ENCODE measurements at regions of chr12 and their contacts with region 1.

Region 1: GRCh38 chr12:52980693-52981423 is 25.4 kb upstream of the EIF4B start:
- DNase-seq: peak; percentile 98
- ATAC-seq: peak; percentile 81
- H3K4me3 ChIP-seq: no peak overlapping the region
- H3K27ac ChIP-seq: peak overlapping the region; percentile 6; the same call in 1 of the 2 replicates
- H3K4me1 ChIP-seq: peaks cover 15 to 25% of the 10 kb centered on the region in 2 experiments; a peak in 3 of 4 replicates
- H3K27me3 ChIP-seq: no peaks in the 10 kb centered on the region
- CTCF ChIP-seq: peak in 2 of 3 experiments; percentile 98 to 100; a peak in 4 of 6 replicates
- POLR2A ChIP-seq: no peak
- RAD21 ChIP-seq: no peak

Region 2: GRCh38 chr12:52147367-52147972 is 833.4 kb before region 1 on chr12:
- CTCF ChIA-PET with region 1: interaction called, 17 read pairs
- POLR2A ChIA-PET with region 1: interaction called, 4 read pairs
- RAD21 ChIA-PET with region 1: interaction called in 1 of 2 experiments, 5 read pairs
- intact Hi-C with region 1: loop called (anchors 2 kb)
- DNase-seq: peak; percentile 99
- ATAC-seq: peak; percentile 61
- H3K4me3 ChIP-seq: peak overlapping the region; percentile 46 to 55
- H3K27ac ChIP-seq: peak overlapping the region; percentile 100
- H3K4me1 ChIP-seq: peaks cover 83 to 99% of the 10 kb centered on the region in 2 experiments
- H3K27me3 ChIP-seq: no peaks in the 10 kb centered on the region
- CTCF ChIP-seq: no peak
- POLR2A ChIP-seq: no peak
- RAD21 ChIP-seq: no peak

Region 3: DNA sequence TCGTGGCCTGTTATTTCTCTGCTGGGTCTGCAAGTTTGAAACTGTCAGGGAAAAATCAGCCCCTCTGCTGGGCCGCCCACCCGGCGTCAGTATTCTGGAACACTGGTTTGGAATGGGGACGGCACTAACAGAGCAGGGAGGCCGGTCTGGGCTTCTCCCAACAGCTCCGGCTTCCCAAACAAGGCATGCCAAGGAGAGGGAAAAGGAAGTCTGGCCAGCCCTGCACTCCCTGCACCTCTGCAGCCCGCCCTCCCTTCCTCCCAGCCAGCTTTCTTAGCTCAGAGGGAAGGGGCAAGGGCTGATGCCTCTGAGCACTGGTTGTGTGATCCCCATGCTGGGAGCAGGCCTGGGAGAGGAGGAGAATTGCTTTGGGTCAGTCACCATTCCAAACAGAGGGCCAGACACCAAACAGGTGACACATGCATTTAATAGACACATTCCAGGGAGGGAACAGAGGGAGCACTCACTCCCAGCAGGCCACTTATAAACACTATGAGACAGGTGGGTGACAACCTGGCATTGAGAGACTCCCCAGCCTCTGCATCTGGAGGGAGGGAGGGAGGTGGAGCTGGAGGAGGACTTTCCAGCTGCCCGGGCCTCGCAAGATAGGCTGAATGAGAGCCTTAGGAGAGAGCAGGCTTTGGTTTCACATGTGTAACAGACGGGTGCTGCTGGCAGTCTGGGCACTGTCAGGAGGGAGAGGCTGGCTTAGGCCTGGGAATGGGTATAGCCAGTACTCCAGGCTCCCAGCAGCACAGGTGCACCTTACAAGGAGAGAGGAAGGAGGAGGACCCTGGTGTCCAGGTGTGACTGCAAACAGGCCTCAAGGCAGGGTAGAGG is 557.0 kb before region 1 on chr12:
- CTCF ChIA-PET with region 1: no interaction called
- POLR2A ChIA-PET with region 1: no interaction called
- RAD21 ChIA-PET with region 1: no interaction called
- intact Hi-C with region 1: no loop called
- DNase-seq: no peak
- ATAC-seq: peak; percentile 37
- H3K4me3 ChIP-seq: no peak overlapping the region
- H3K27ac ChIP-seq: no peak overlapping the region
- H3K4me1 ChIP-seq: peaks cover 0 to 23% of the 10 kb centered on the region in 2 experiments; a peak in 2 of 4 replicates
- H3K27me3 ChIP-seq: no peaks in the 10 kb centered on the region
- CTCF ChIP-seq: no peak
- POLR2A ChIP-seq: no peak
- RAD21 ChIP-seq: no peak

Region 4: DNA sequence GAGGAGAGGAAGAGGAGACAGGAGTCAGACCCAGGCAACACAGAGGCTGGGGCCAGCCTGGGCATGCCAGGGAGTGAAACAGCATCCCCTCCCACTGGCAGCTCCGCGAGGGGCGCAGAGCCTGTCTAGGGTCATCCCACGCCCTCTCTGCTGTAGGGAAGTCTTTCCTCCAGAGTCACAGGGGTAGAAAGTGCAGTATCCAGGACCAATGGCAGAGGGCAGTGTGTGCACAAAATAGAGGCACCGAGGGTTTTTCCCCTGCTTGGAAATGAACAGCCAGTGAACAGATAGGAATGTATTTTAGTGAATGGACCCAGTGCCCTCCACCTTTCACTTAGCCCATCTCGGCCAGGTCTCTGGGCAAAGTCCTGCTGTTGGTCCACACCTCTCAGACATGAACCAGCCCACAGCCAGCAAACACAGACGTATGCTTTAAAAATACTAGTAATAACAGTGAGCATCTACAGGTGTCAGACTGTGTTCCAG is 397.8 kb before region 1 on chr12:
- CTCF ChIA-PET with region 1: interaction called, 4 read pairs
- POLR2A ChIA-PET with region 1: no interaction called
- RAD21 ChIA-PET with region 1: no interaction called
- intact Hi-C with region 1: loop called (anchors 2 kb)
- DNase-seq: peak; percentile 36
- ATAC-seq: peak; percentile 96
- H3K4me3 ChIP-seq: no peak overlapping the region
- H3K27ac ChIP-seq: no peak overlapping the region
- H3K4me1 ChIP-seq: peaks cover 0 to 40% of the 10 kb centered on the region in 2 experiments; a peak in 3 of 4 replicates
- H3K27me3 ChIP-seq: no peaks in the 10 kb centered on the region
- CTCF ChIP-seq: peak; percentile 73 to 95 (median 79)
- POLR2A ChIP-seq: no peak
- RAD21 ChIP-seq: peak; percentile 93

Region 5: DNA sequence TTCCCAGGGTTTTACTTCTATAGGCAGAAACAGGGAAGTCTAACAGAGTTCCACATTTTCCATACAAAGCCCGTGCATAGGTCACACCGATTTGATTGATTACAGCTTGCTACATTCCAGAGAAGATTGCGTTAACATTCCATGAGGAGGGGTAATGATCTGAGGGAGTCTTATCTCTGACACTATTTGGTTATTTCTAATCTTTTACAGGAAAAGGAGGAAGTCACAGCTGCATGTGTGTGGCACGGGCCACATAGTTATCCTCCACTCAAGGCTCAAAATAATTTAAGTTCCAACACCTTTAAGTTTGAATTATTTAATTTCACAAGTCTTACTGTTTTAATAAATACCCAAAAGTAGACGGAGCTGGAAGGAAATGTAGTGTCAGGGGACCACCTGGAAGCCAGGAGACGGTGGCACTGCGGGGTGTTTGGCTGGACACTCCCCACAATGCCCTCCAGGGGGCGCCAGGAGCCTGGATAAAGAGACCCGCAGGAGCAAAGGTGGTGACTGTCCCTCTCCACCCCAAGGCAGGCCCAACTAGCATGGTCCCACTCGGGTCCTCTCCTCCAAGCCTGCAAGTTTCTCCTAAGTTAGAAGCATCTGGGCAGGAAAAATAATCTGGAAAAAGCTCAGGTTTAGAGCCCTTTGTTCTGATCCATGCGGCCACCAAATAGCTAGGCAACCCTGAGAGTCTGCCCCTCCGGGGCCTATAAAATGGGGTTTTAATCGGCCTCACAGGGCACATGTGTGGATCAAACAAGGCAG is 96.1 kb before region 1 on chr12:
- CTCF ChIA-PET with region 1: interaction called, 370 read pairs
- POLR2A ChIA-PET with region 1: interaction called, 50 read pairs
- RAD21 ChIA-PET with region 1: interaction called, 48 to 90 read pairs
- intact Hi-C with region 1: loop called (anchors 1 kb)
- DNase-seq: no peak
- ATAC-seq: peak; percentile 85
- H3K4me3 ChIP-seq: no peak overlapping the region
- H3K27ac ChIP-seq: no peak overlapping the region
- H3K4me1 ChIP-seq: peaks cover 16 to 35% of the 10 kb centered on the region in 2 experiments; a peak in 3 of 4 replicates
- H3K27me3 ChIP-seq: no peaks in the 10 kb centered on the region
- CTCF ChIP-seq: peak; percentile 87 to 99 (median 97)
- POLR2A ChIP-seq: no peak
- RAD21 ChIP-seq: peak; percentile 100

Region 6: DNA sequence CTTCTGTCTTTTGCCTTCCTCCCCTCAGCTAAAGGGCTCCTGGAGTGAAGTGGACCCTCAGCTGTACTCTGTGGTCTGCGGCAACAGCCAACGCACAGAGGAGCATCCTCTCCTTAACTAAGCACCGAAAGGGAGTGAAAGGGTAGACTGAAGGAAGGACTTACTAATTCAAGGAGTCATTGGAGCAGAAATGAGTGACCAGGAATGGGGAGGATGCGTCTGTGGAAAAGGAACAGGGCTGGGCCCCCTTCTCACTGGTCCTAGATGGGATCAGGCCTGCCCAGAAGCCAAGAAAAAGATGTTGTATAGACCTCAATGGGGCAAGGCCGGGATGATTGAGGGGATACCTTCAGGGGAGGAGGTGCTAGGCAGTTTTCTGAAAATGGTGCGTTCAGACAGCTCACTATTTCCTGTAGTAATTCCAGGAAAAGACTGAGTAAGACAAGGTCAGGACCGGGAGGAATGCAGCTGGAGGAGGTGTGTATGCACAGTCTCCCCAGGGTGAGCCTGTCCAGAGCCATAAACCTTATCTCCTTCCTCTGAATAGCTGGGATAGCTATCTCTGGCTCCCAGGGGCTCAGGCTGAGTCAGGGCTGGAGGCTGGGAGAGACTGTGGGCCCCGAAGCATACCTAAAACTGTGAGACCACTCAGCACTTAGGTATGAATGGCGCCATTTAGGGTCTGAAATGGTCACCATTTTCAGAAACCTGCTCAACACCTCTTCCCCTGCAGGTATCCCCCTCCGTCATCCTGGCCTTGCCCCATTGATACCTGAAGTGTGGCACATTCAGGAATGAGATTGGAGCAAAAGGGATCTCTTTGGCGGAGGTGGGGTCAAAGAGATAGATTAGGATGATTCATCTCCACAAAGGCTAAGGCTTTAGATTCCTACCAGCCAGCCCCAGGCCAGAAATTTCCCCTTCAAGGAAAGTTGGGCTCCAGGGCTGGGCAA is 55.8 kb before region 1 on chr12:
- CTCF ChIA-PET with region 1: interaction called, 17 read pairs
- POLR2A ChIA-PET with region 1: interaction called, 3 read pairs
- RAD21 ChIA-PET with region 1: interaction called in 1 of 2 experiments, 3 read pairs
- intact Hi-C with region 1: no loop called
- DNase-seq: peak; percentile 90
- ATAC-seq: peak; percentile 68
- H3K4me3 ChIP-seq: peak overlapping the region; percentile 6 to 51
- H3K27ac ChIP-seq: peak overlapping the region; percentile 95
- H3K4me1 ChIP-seq: peaks cover 67 to 94% of the 10 kb centered on the region in 2 experiments
- H3K27me3 ChIP-seq: no peaks in the 10 kb centered on the region
- CTCF ChIP-seq: no peak
- POLR2A ChIP-seq: no peak
- RAD21 ChIP-seq: no peak

Region 7: DNA sequence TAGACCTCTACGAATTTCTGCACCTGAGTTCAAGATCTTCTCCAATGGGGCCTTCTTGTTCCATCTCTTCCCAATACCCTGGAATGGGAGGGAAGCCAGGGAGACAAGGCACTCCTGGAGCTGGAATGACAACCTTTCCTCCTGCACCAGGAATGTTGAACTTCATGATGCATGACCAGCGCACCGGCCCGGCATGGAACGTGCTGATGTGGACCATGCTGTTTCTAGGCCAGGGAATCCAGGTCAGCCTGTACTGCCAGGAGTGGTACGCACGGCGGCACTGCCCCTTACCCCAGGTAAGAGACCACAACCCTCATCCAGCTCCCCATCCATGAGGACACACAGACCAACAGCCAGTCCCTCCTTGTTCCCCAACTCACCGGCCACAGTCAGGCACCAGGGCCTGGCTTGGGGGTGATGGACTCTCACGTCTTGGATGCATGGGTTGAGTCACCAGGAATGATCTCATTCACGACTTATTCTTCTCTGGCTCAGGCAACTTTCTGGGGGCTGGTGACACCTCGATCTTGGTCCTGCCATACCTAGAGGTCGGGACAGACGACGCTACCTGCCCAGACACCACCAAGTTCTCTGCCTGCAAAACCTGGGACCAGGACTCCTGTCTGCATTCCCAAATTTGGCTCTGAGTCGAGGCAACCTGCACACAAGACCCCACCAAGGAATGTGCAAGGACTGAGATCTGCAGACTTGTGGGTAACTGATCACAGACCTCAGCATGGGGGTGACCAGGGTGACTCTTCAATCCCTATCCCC is 142.9 kb after region 1 on chr12:
- CTCF ChIA-PET with region 1: no interaction called
- POLR2A ChIA-PET with region 1: no interaction called
- RAD21 ChIA-PET with region 1: no interaction called
- intact Hi-C with region 1: no loop called
- DNase-seq: no peak
- ATAC-seq: no peak
- H3K4me3 ChIP-seq: no peak overlapping the region
- H3K27ac ChIP-seq: no peak overlapping the region
- H3K4me1 ChIP-seq: no peaks in the 10 kb centered on the region
- H3K27me3 ChIP-seq: no peaks in the 10 kb centered on the region
- CTCF ChIP-seq: no peak
- POLR2A ChIP-seq: no peak
- RAD21 ChIP-seq: no peak

Measured in HCT116 (cell line).